CD8-positive, alpha-beta T cell (primary cell): ENCODE measurements at regions of chr9 and their contacts with region 1.

Region 1: DNA sequence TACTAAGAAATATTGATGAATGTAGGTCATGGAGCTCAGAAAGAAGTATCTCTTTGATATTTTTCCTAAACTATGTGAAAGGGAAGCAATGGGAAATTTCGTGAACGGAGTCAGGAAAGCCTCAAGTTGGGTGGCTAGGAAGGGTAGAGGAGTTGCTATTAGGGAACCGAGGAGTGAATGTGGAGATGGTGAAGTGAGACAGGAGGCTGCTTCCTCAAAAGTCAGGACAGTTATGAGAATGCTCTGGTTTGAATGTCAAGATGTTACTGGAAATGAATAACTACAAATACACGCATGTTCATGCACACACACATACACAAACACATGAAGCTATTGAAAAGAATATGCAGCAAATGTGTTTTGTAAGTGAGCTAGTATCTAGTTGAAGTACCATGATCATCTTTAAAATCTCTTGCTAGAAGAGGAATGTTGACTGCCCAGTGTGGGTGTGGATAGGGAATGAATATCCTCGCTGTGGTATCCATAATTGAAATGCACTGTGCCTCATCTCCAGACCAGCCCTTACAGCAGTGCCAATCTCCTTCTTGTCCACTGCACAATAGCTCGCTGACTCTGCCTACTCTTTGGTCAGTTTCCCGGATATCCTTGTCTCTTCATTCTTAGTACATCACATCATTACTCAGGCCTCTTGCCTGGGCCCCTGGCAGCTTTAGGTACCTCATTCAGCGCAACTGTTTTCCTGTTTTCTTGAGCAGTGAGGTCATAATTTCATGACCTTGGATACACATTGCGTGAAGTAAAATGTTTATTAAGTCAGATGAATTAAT is 21.9 kb upstream of the PDCD1LG2 start:
- DNase-seq: no peak
- ATAC-seq: no peak
- H3K4me3 ChIP-seq: no peak overlapping the region
- H3K4me3 Mint-ChIP-seq: no peak overlapping the region
- H3K27ac ChIP-seq: no peak overlapping the region
- H3K27ac Mint-ChIP-seq: no peak overlapping the region
- H3K4me1 ChIP-seq: no peaks in the 10 kb centered on the region
- H3K4me1 Mint-ChIP-seq: no peaks in the 10 kb centered on the region
- H3K27me3 ChIP-seq: no peaks in the 10 kb centered on the region
- H3K27me3 Mint-ChIP-seq: peaks cover 1% of the 10 kb centered on the region
- CTCF ChIP-seq: no peak

Region 2: GRCh38 chr9:5536684-5537083 is 48.3 kb after region 1 on chr9:
- CTCF ChIA-PET with region 1: no interaction called
- POLR2A ChIA-PET with region 1: no interaction called
- intact Hi-C with region 1: loop called in 1 of 2 experiments (anchors 5 kb)
- DNase-seq: peak in 1 of 9 experiments; percentile 26
- ATAC-seq: no peak
- H3K4me3 ChIP-seq: no peak overlapping the region
- H3K4me3 Mint-ChIP-seq: no peak overlapping the region
- H3K27ac ChIP-seq: no peak overlapping the region
- H3K27ac Mint-ChIP-seq: no peak overlapping the region
- H3K4me1 ChIP-seq: peaks cover 8% of the 10 kb centered on the region
- H3K4me1 Mint-ChIP-seq: peaks cover 15% of the 10 kb centered on the region
- H3K27me3 ChIP-seq: no peaks in the 10 kb centered on the region
- H3K27me3 Mint-ChIP-seq: no peaks in the 10 kb centered on the region
- CTCF ChIP-seq: no peak

Region 3: DNA sequence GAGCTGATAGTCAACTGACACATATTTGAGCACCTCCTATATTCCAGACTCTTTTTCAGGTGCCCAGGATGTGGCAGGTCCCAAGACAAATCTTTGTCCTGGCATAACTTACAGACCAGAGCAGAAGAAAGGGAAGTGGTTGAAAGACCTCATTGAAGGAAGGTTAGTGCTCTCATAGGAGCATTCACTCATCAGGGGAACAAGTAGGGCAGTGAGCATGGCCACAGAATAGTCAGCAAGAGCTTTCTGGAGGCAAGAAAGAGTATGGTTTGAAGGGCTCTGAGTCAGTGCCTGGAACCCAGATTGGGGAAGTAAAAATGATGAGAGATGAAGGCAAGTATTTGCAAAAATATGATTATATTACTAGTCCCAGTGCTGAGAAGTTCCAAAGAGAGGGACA is 369.5 kb after region 1 on chr9:
- CTCF ChIA-PET with region 1: no interaction called
- POLR2A ChIA-PET with region 1: no interaction called
- intact Hi-C with region 1: no loop called
- DNase-seq: no peak
- ATAC-seq: no peak
- H3K4me3 ChIP-seq: no peak overlapping the region
- H3K4me3 Mint-ChIP-seq: no peak overlapping the region
- H3K27ac ChIP-seq: no peak overlapping the region
- H3K27ac Mint-ChIP-seq: no peak overlapping the region
- H3K4me1 ChIP-seq: no peaks in the 10 kb centered on the region
- H3K4me1 Mint-ChIP-seq: peaks cover 14% of the 10 kb centered on the region
- H3K27me3 ChIP-seq: no peaks in the 10 kb centered on the region
- H3K27me3 Mint-ChIP-seq: no peaks in the 10 kb centered on the region
- CTCF ChIP-seq: no peak

Region 4: DNA sequence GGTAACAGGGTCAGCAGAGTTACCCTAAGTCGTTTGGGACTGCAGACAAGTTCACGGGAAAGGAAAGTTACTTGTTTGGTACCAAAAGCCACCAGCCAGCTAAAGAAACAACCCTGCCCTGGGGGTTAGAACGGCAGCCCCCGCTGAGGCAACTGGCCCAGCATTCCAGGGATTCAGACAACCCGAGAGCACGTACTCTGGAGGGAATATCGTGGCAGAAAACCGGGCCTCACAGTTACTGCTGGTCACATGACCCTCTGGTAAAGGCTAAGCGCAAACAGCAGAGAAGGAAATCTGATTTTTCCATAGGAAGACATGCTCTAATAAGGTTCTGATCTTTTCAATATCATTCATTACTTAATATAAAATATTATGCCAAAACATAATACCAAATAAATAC is 379.8 kb after region 1 on chr9:
- CTCF ChIA-PET with region 1: no interaction called
- POLR2A ChIA-PET with region 1: no interaction called
- intact Hi-C with region 1: no loop called
- DNase-seq: no peak
- ATAC-seq: no peak
- H3K4me3 ChIP-seq: no peak overlapping the region
- H3K4me3 Mint-ChIP-seq: no peak overlapping the region
- H3K27ac ChIP-seq: no peak overlapping the region
- H3K27ac Mint-ChIP-seq: no peak overlapping the region
- H3K4me1 ChIP-seq: no peaks in the 10 kb centered on the region
- H3K4me1 Mint-ChIP-seq: peaks cover 6% of the 10 kb centered on the region
- H3K27me3 ChIP-seq: no peaks in the 10 kb centered on the region
- H3K27me3 Mint-ChIP-seq: no peaks in the 10 kb centered on the region
- CTCF ChIP-seq: no peak